ENCODE measurements at regions of chr9 and their contacts with region 1.

Region 1: GRCh38 chr9:134316449-134317160 is 9.7 kb upstream of the RXRA start:
- DNase-seq: peak; percentile 68
- ATAC-seq: peak; percentile 22
- H3K4me3 ChIP-seq: no peak overlapping the region
- H3K27ac ChIP-seq: peak overlapping the region; percentile 5; the same call in 1 of the 2 replicates
- H3K4me1 ChIP-seq: peaks cover 36% of the 10 kb centered on the region
- H3K27me3 ChIP-seq: no peaks in the 10 kb centered on the region
- CTCF ChIP-seq: no peak
- POLR2A ChIP-seq: no peak
- RAD21 ChIP-seq: no peak

Region 2: GRCh38 chr9:134217832-134218629 is 98.6 kb before region 1 on chr9:
- CTCF ChIA-PET with region 1: interaction called, 3 read pairs
- POLR2A ChIA-PET with region 1: no interaction called
- dilution Hi-C with region 1: no loop called
- in situ Hi-C with region 1: no loop called
- intact Hi-C with region 1: loop called (anchors 5 kb)
- DNase-seq: no peak
- ATAC-seq: no peak
- H3K4me3 ChIP-seq: no peak overlapping the region
- H3K27ac ChIP-seq: no peak overlapping the region
- H3K4me1 ChIP-seq: peaks cover 40% of the 10 kb centered on the region
- H3K27me3 ChIP-seq: no peaks in the 10 kb centered on the region
- CTCF ChIP-seq: 0 out of 2 replicates have a peak, but pooled peaks have one; percentile 1
- POLR2A ChIP-seq: no peak
- RAD21 ChIP-seq: no peak

Region 3: DNA sequence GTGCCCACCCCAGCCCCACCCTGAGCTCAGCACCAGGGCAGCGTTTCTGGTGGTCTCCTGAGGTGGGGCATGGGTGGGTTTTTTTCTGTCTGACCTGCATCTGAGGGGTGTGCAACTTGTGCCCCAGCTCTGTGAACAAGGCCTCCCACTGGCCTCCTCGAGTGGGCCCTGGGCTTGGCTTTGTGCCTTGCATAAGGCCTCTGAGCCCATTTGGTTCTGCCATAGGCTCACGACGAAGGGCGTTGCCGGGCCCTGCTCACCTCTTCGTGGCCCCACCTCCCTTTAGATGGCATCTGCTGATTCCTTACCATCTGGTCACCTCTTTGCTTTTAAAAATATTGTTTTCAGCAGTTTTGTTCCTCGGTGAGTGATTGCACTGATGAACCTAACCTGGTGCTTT is 197.9 kb after region 1 on chr9:
- CTCF ChIA-PET with region 1: no interaction called
- POLR2A ChIA-PET with region 1: no interaction called
- dilution Hi-C with region 1: no loop called
- in situ Hi-C with region 1: no loop called
- intact Hi-C with region 1: no loop called
- DNase-seq: no peak
- ATAC-seq: no peak
- H3K4me3 ChIP-seq: no peak overlapping the region
- H3K27ac ChIP-seq: no peak overlapping the region
- H3K4me1 ChIP-seq: peaks cover 6% of the 10 kb centered on the region
- H3K27me3 ChIP-seq: no peaks in the 10 kb centered on the region
- CTCF ChIP-seq: no peak
- POLR2A ChIP-seq: no peak
- RAD21 ChIP-seq: no peak

Region 4: GRCh38 chr9:134564431-134565170 is 248.0 kb after region 1 on chr9:
- CTCF ChIA-PET with region 1: no interaction called
- POLR2A ChIA-PET with region 1: interaction called, 11 read pairs
- dilution Hi-C with region 1: no loop called
- in situ Hi-C with region 1: no loop called
- intact Hi-C with region 1: no loop called
- DNase-seq: peak; percentile 94
- ATAC-seq: peak; percentile 60
- H3K4me3 ChIP-seq: no peak overlapping the region
- H3K27ac ChIP-seq: no peak overlapping the region
- H3K4me1 ChIP-seq: peaks cover 11% of the 10 kb centered on the region
- H3K27me3 ChIP-seq: no peaks in the 10 kb centered on the region
- CTCF ChIP-seq: no peak
- POLR2A ChIP-seq: no peak
- RAD21 ChIP-seq: no peak

Measured in IMR-90 (cell line).